B cell (primary cell): ENCODE measurements at regions of chr10 and their contacts with region 1.

Region 1: GRCh38 chr10:11724938-11725776 is 17.0 kb upstream of the ECHDC3 start:
- DNase-seq: peak; percentile 79
- ATAC-seq: peak; percentile 87
- H3K4me3 ChIP-seq: no peak overlapping the region
- H3K4me3 Mint-ChIP-seq: peak overlapping the region; percentile 27
- H3K27ac ChIP-seq: no peak overlapping the region
- H3K27ac Mint-ChIP-seq: peak overlapping the region; percentile 72
- H3K4me1 ChIP-seq: peaks cover 19 to 24% of the 10 kb centered on the region in 2 donors
- H3K4me1 Mint-ChIP-seq: peaks cover 27% of the 10 kb centered on the region
- H3K27me3 ChIP-seq: no peaks in the 10 kb centered on the region
- H3K27me3 Mint-ChIP-seq: no peaks in the 10 kb centered on the region
- CTCF ChIP-seq: peak; percentile 86

Region 2: DNA sequence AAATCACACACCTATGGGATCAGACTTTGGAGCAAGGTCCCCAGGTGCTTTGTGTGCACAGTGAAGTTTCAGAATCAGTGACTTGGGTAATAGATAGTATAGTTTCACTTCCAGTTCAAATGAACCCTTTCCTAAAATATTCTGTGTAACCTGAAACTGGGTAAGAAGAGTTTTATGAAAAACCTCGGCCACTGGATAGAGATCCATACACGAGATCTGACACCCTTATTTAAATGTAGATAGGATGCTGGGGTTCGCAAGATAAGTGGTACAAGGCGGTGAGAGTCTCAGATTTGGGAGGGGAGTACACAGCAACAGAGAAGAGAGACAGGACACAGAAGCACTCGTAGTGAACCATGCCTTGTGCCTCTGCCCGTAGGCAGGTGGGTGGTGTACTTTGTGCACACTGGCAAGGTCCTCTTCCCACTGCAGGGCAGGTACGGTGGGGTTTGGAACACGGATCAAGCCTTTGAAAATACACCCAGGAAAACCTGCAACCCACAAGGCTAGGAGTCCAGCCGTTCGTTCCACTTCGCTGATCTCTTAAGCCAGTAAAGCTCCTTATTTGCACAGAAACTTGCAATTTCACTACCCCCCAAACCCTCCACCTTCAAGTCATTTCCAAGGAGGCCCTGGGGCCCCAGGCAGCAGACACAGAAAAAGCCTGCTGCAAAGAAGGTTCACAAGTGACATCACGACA is 276.5 kb before region 1 on chr10:
- CTCF ChIA-PET with region 1: no interaction called
- POLR2A ChIA-PET with region 1: no interaction called
- intact Hi-C with region 1: no loop called
- DNase-seq: peak; percentile 49
- ATAC-seq: peak; percentile 66
- H3K4me3 ChIP-seq: peak overlapping the region in 4 of 5 experiments; percentile 20 to 60 (median 34)
- H3K4me3 Mint-ChIP-seq: peak overlapping the region; percentile 88
- H3K27ac ChIP-seq: no peak overlapping the region
- H3K27ac Mint-ChIP-seq: peak overlapping the region; percentile 76
- H3K4me1 ChIP-seq: peaks cover 21 to 30% of the 10 kb centered on the region in 2 donors
- H3K4me1 Mint-ChIP-seq: peaks cover 34% of the 10 kb centered on the region
- H3K27me3 ChIP-seq: no peaks in the 10 kb centered on the region
- H3K27me3 Mint-ChIP-seq: no peaks in the 10 kb centered on the region
- CTCF ChIP-seq: no peak

Region 3: GRCh38 chr10:11510736-11511135 is 214.4 kb before region 1 on chr10:
- CTCF ChIA-PET with region 1: interaction called, 183 read pairs
- POLR2A ChIA-PET with region 1: interaction called, 4 read pairs
- intact Hi-C with region 1: loop called (anchors 1 kb)
- DNase-seq: no peak
- ATAC-seq: no peak
- H3K4me3 ChIP-seq: no peak overlapping the region
- H3K4me3 Mint-ChIP-seq: no peak overlapping the region
- H3K27ac ChIP-seq: no peak overlapping the region
- H3K27ac Mint-ChIP-seq: no peak overlapping the region
- H3K4me1 ChIP-seq: peaks cover 5% of the 10 kb centered on the region in 2 donors
- H3K4me1 Mint-ChIP-seq: peaks cover 24% of the 10 kb centered on the region
- H3K27me3 ChIP-seq: no peaks in the 10 kb centered on the region
- H3K27me3 Mint-ChIP-seq: no peaks in the 10 kb centered on the region
- CTCF ChIP-seq: no peak

Region 4: DNA sequence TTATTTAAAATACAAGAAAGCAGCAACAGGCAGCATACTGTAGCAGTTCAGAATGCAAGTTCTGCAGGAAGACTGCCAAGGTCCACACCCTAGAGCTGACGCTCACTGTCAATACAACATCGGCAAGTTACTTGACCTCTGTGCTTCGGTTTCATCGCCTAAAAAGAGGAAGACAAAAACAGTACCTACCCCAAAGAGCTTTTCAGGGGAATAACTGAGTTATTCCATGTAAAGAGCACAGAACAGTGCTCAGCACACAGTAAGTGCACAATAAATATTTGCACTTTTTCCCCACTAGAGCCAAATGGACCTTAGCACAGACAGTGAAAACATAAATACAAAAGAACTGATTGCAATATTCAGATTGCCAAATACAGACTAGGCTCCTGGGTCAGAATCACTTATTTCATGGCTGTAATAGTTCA is 202.3 kb before region 1 on chr10:
- CTCF ChIA-PET with region 1: interaction called, 92 read pairs
- POLR2A ChIA-PET with region 1: no interaction called
- intact Hi-C with region 1: no loop called
- DNase-seq: no peak
- ATAC-seq: peak; percentile 60
- H3K4me3 ChIP-seq: no peak overlapping the region
- H3K4me3 Mint-ChIP-seq: no peak overlapping the region
- H3K27ac ChIP-seq: peak overlapping the region in 1 of 2 donors; percentile 13
- H3K27ac Mint-ChIP-seq: peak overlapping the region; percentile 39
- H3K4me1 ChIP-seq: peaks cover 9 to 20% of the 10 kb centered on the region in 2 donors
- H3K4me1 Mint-ChIP-seq: peaks cover 43% of the 10 kb centered on the region
- H3K27me3 ChIP-seq: no peaks in the 10 kb centered on the region
- H3K27me3 Mint-ChIP-seq: no peaks in the 10 kb centered on the region
- CTCF ChIP-seq: no peak

Region 5: GRCh38 chr10:11595395-11595692 is 129.8 kb before region 1 on chr10:
- CTCF ChIA-PET with region 1: interaction called, 6 read pairs
- POLR2A ChIA-PET with region 1: no interaction called
- intact Hi-C with region 1: loop called (anchors 5 kb)
- DNase-seq: no peak
- ATAC-seq: peak; percentile 23
- H3K4me3 ChIP-seq: peak overlapping the region in 3 of 5 experiments; percentile 1 to 47 (median 15)
- H3K4me3 Mint-ChIP-seq: peak overlapping the region; percentile 77
- H3K27ac ChIP-seq: peak overlapping the region; percentile 53 to 80
- H3K27ac Mint-ChIP-seq: peak overlapping the region; percentile 86
- H3K4me1 ChIP-seq: peaks cover 35 to 62% of the 10 kb centered on the region in 2 donors
- H3K4me1 Mint-ChIP-seq: peaks cover 67% of the 10 kb centered on the region
- H3K27me3 ChIP-seq: no peaks in the 10 kb centered on the region
- H3K27me3 Mint-ChIP-seq: no peaks in the 10 kb centered on the region
- CTCF ChIP-seq: no peak

Region 6: DNA sequence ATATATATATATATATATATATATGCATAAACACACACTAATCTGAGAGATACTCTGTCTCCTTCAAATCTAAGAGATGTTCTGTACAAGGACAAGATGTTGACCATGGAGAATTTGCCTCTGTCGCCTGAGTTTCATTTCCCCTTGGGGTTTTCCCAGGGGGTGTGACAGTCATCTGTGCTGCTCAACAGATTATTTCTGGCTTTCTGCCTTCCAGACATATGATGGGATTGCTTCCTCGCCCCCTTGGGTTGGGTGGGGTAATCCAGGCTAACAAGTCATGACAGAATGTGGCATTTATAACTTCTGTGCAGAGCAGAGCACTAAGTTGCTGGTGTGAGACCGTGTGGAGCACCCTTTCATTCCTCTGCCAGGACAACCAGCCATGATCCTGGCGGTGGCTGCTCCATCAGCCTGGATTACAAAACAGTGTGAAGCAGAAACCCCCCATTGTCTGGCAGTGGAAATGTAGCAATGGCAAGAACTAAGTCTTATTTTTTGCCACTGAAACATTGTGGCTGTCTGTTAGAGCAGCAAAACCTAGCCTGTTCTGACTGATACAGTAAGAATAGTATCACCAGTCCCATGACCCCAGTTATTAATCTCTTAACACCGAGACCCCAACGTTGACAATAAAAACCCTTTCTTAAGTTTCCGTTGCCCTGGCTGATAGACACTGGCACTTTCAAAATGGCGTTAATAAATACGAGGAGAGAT is 100.0 kb before region 1 on chr10:
- CTCF ChIA-PET with region 1: no interaction called
- POLR2A ChIA-PET with region 1: no interaction called
- intact Hi-C with region 1: no loop called
- DNase-seq: peak; percentile 89
- ATAC-seq: peak; percentile 94
- H3K4me3 ChIP-seq: peak overlapping the region in 2 of 5 experiments; percentile 26 to 35
- H3K4me3 Mint-ChIP-seq: peak overlapping the region; percentile 76
- H3K27ac ChIP-seq: peak overlapping the region; percentile 75 to 78
- H3K27ac Mint-ChIP-seq: peak overlapping the region; percentile 92
- H3K4me1 ChIP-seq: peaks cover 27 to 28% of the 10 kb centered on the region in 2 donors
- H3K4me1 Mint-ChIP-seq: peaks cover 50% of the 10 kb centered on the region
- H3K27me3 ChIP-seq: no peaks in the 10 kb centered on the region
- H3K27me3 Mint-ChIP-seq: no peaks in the 10 kb centered on the region
- CTCF ChIP-seq: no peak

Region 7: GRCh38 chr10:11713186-11713743 is 11.9 kb before region 1 on chr10:
- CTCF ChIA-PET with region 1: interaction called, 12 read pairs
- POLR2A ChIA-PET with region 1: interaction called, 3 read pairs
- intact Hi-C with region 1: no loop called
- DNase-seq: peak; percentile 34
- ATAC-seq: no peak
- H3K4me3 ChIP-seq: no peak overlapping the region
- H3K4me3 Mint-ChIP-seq: peak overlapping the region; percentile 18
- H3K27ac ChIP-seq: no peak overlapping the region
- H3K27ac Mint-ChIP-seq: peak overlapping the region; percentile 24
- H3K4me1 ChIP-seq: peaks cover 42 to 61% of the 10 kb centered on the region in 2 donors
- H3K4me1 Mint-ChIP-seq: peaks cover 51% of the 10 kb centered on the region
- H3K27me3 ChIP-seq: no peaks in the 10 kb centered on the region
- H3K27me3 Mint-ChIP-seq: no peaks in the 10 kb centered on the region
- CTCF ChIP-seq: no peak